H1 (cell line): ENCODE measurements at regions of chr11 and their contacts with region 1.

Region 1: DNA sequence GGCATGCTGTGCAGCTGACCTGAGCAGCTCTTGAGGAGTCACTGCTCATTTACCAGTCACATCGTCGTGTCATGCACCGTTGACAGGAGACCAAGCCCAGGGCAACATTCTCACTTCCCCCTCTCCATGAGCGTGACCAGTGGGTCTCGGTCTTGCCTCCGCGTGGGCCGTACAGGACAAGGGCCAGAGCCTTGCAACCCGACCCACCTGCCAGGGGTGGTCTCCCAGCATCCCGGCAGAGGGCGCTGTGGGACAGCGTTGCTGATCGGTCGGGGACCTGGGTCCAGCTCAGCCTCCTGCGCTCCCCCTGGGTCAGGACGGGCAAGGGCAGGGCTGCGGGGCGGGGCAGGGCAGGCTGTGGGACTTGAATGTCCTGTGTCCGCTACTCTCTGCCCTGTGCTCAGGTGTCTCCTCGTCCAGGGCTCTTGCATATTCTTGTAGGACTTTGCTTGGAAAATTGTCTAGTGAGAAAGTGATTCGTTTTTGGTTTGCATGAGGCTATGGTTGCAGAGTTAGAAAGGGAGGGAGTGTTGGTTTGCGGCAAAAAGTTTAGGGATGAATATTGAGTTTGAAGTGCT is 16.2 kb downstream of the EIF4G2 start:
- DNase-seq: peak; percentile 77 to 99
- H3K4me3 ChIP-seq: no peak overlapping the region
- H3K27ac ChIP-seq: no peak overlapping the region
- H3K4me1 ChIP-seq: peaks cover 0 to 5% (median 2%) of the 10 kb centered on the region in 4 experiments; a peak in 2 of 7 replicates
- H3K27me3 ChIP-seq: peaks cover 0 to 2% (median 0%) of the 10 kb centered on the region in 4 experiments; a peak in 2 of 7 replicates
- CTCF ChIP-seq: peak; percentile 98 to 99 (median 98)
- EP300 ChIP-seq: no peak
- POLR2A ChIP-seq: no peak
- RAD21 ChIP-seq: peak; percentile 95 to 97

Region 2: DNA sequence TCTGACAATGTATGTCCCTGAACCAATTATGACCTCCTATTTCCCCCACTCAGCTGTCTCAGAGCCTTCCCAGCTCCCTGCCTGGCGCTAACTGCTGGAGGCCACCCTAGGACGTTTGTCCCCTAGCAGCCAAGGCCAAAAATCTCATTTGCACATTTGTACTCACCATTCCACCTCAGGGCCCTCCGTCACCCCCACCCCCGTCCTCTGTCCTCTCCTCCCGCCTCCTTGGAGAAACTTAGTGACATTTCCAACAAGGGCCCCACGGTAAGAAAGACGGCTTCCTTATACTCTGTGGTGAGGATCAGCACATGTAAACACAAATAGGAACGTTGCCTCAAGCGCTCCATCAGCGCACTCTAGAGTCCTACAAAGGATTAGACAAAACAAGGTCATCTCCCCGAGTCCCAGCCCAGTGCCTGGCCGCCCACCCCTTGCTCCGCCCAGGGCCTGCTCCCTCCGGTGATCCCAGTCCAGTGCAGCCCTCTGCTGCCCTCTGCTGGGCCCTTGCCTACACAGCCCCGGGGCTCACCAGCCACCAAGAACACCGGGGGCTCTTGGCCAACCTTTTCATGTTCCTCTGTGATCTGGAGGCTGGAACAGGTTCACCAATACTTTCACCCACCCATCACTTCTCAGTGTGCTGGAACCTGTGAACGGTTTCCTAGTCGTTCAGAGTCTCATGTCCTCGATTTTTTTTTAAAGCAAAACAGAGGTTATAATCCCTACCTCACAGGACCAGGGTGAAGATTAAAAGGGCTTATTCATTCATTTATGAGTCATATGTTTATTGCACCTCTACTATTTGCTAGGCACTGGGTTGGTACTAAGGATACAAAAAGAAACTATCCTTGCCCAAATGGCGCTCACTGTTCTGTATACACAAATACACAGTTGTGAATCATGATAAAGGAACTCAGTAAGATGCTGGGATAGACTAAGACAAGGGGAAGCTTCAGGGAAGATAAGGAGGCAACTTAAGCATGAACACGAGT is 56.7 kb before region 1 on chr11:
- CTCF ChIA-PET with region 1: no interaction called
- POLR2A ChIA-PET with region 1: no interaction called
- DNase-seq: peak; percentile 90 to 98
- H3K4me3 ChIP-seq: peak overlapping the region in 1 of 4 experiments; percentile 47; a peak in 4 of 8 replicates
- H3K27ac ChIP-seq: no peak overlapping the region
- H3K4me1 ChIP-seq: peaks cover 0 to 4% (median 3%) of the 10 kb centered on the region in 4 experiments; a peak in 4 of 7 replicates
- H3K27me3 ChIP-seq: no peaks in the 10 kb centered on the region; a peak in 1 of 7 replicates
- CTCF ChIP-seq: peak; percentile 85 to 95 (median 93)
- EP300 ChIP-seq: no peak; a peak in 1 of 3 replicates
- POLR2A ChIP-seq: 0 out of 3 replicates have a peak, but pooled peaks of 1 of the 2 experiments have one; percentile 23
- RAD21 ChIP-seq: peak; percentile 99

Region 3: DNA sequence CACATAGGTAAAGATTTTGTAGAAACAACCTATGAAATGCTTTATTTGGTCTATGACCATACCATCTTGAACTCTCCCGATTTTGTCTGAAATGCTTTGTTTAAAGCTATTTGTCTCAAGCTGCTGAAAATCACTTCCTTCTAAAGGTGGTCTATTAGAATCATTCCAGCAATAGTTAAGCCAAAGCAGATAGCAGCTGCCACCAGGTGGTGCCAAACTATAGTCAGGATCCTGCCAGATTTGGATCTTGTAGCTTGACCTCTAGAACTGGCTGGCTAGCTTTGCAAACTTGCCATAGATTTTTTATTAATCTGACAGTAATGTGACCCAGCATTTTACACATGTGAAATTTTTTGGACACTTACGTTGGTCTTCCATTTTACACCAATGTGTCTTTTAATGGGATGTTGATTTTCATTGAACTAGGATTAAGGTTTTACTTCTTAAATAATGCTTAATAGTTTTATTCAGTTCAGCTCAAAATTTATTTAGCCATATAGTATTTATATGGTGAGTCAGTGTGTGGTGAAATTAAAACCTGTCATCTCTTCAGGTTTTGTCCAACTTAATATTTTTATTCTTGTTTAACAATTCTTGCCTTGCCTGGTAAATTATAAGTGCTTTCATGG is 21.7 kb before region 1 on chr11:
- CTCF ChIA-PET with region 1: interaction called, 64 read pairs
- POLR2A ChIA-PET with region 1: interaction called, 7 read pairs
- DNase-seq: peak in 1 of 2 experiments; percentile 61
- H3K4me3 ChIP-seq: no peak overlapping the region
- H3K27ac ChIP-seq: no peak overlapping the region
- H3K4me1 ChIP-seq: peaks cover 0 to 6% (median 0%) of the 10 kb centered on the region in 4 experiments; a peak in 1 of 7 replicates
- H3K27me3 ChIP-seq: no peaks in the 10 kb centered on the region
- CTCF ChIP-seq: peak; percentile 12 to 84 (median 60)
- EP300 ChIP-seq: no peak
- POLR2A ChIP-seq: no peak
- RAD21 ChIP-seq: peak; percentile 48 to 59

Region 4: DNA sequence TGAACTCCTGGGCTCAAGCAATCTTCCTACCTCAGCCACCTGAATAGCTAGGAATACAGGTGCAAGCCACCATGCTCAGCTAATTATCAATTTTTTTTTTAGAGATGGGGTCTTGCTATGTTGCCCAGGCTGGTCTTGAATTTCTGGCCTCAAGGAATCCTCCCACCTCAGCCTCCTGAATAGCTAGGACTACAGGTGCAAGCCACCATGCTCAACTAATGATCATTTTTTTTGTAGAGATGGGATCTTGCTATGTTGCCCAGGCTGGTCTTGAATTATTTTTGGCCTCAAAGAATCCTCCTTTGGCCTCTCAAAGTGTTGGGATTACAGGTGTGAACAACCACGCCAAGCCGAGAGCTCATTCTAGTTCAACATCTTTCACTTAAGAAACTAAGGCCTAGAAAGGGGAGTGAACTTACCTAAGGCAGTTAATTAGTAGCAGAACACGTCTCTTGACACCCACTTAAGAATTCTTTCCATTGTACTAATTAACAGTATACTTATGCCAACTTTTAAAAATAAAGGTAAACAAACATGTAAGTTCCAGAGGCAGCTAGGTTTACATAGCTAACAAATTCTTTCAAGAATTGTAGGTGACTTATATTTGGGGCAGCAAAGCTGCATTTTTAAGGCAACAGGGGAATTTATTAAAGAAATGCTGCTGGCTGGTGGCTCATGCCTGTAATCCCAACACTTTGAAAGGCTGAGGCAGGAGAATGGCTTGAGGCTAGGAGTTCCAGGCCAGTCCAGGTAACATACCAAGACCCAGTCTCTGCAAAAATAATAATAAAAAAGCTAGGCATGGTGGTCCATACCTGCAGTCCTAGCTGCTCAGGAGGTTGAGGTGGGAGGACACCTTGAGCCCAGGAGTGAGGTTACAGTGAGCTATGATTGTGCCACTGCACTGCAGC is 55.7 kb after region 1 on chr11:
- CTCF ChIA-PET with region 1: interaction called, 10 read pairs
- POLR2A ChIA-PET with region 1: interaction called, 5 read pairs
- DNase-seq: no peak
- H3K4me3 ChIP-seq: no peak overlapping the region
- H3K27ac ChIP-seq: no peak overlapping the region
- H3K4me1 ChIP-seq: no peaks in the 10 kb centered on the region
- H3K27me3 ChIP-seq: no peaks in the 10 kb centered on the region
- CTCF ChIP-seq: no peak
- EP300 ChIP-seq: no peak
- POLR2A ChIP-seq: no peak
- RAD21 ChIP-seq: no peak

Region 5: DNA sequence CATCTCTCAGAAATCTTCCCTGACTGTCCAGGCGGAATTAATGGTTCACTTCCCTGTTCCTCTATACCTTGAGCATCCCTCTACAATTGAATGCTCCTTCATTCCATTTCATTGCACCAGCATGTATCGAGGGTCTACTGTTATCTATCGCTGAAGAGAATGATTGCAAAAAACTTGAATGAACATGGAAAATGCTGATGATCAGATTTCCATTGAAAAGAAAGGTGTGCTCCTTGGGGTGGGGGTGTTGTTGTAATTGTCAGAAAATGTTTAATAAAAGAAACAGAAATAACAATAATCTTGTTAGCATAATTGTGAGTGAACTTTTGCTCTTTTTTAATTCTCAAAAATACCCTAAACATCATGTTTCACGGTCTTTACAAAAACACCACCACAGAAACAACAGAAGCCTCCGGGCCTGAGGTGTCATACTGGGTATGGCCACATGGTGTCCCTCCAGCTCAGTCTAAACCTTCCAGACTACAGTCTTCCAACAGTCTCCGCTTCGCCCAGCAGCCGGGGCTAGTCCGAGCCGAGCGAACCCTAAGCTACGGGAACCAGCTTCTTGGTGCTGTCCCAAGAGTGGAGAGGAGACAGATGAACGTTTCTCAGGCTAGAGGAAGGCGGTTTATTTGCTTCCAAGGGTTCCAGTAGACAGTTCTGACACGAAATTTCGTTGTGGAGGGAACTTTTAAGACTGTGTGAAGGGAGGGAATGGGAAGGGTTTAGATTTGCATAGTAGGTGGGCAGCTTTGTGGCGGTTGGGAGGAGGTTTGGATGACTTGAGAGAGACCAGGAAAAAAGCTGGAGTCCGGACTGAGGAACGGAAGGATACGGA is 141.2 kb after region 1 on chr11:
- CTCF ChIA-PET with region 1: interaction called, 14 read pairs
- POLR2A ChIA-PET with region 1: interaction called, 4 read pairs
- DNase-seq: peak; percentile 65 to 96
- H3K4me3 ChIP-seq: peak overlapping the region; percentile 64 to 86 (median 76); a peak in 7 of 8 replicates
- H3K27ac ChIP-seq: peak overlapping the region; percentile 49; the same call in 1 of the 2 replicates
- H3K4me1 ChIP-seq: peaks cover 3 to 14% (median 5%) of the 10 kb centered on the region in 4 experiments; a peak in 4 of 7 replicates
- H3K27me3 ChIP-seq: peaks cover 0 to 11% (median 10%) of the 10 kb centered on the region in 4 experiments; a peak in 5 of 7 replicates
- CTCF ChIP-seq: peak; percentile 80 to 98 (median 95)
- EP300 ChIP-seq: no peak
- POLR2A ChIP-seq: peak in 1 of 2 experiments; percentile 53; a peak in 1 of 3 replicates
- RAD21 ChIP-seq: peak; percentile 97 to 98

Region 6: GRCh38 chr11:11022125-11022730 is 229.7 kb after region 1 on chr11:
- CTCF ChIA-PET with region 1: interaction called, 36 read pairs
- POLR2A ChIA-PET with region 1: no interaction called
- DNase-seq: no peak
- H3K4me3 ChIP-seq: no peak overlapping the region
- H3K27ac ChIP-seq: no peak overlapping the region
- H3K4me1 ChIP-seq: peaks cover 0 to 4% (median 2%) of the 10 kb centered on the region in 4 experiments; a peak in 5 of 7 replicates
- H3K27me3 ChIP-seq: peaks cover 0 to 3% (median 0%) of the 10 kb centered on the region in 4 experiments; a peak in 1 of 7 replicates
- CTCF ChIP-seq: peak in 2 of 3 experiments; percentile 20 to 29; a peak in 2 of 4 replicates
- EP300 ChIP-seq: no peak
- POLR2A ChIP-seq: no peak
- RAD21 ChIP-seq: peak in 1 of 2 experiments; percentile 39; a peak in 3 of 4 replicates

Region 7: DNA sequence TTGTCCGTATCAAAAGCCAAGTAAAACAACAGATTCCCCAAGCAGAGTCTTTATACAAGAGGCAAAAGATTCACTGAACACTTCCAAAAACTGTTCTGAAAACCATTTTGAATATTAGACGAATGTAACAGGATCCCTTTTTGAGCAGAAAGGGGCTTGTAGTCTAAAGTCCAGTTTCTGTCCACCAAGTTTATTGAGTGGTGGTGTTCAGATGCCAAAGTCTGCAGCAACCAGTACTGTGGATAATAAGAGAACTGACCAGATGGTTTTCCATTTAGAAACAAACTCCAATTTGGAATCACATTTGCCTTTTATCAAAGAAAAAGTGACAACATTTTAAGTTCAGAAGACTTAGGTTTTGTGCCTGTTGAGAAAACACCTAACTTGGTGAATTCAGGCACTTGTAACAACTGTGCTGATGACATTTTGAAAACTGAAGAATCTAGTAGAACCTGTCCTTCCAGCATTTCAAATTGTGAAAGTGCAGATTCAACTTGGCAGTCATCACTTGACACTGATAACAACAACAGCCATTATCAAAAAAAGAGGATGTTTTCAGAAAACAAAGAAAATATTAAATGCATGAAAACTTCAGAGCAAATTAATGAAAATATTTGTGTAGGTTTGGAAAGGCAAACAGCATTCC is 343.5 kb after region 1 on chr11:
- CTCF ChIA-PET with region 1: no interaction called
- POLR2A ChIA-PET with region 1: no interaction called
- DNase-seq: no peak
- H3K4me3 ChIP-seq: no peak overlapping the region
- H3K27ac ChIP-seq: no peak overlapping the region
- H3K4me1 ChIP-seq: peaks cover 0 to 2% (median 0%) of the 10 kb centered on the region in 4 experiments; a peak in 1 of 7 replicates
- H3K27me3 ChIP-seq: no peaks in the 10 kb centered on the region
- CTCF ChIP-seq: no peak
- EP300 ChIP-seq: no peak
- POLR2A ChIP-seq: no peak
- RAD21 ChIP-seq: no peak